ENCODE measurements at regions of chr4 and their contacts with region 1.

Region 1: GRCh38 chr4:80365928-80366327 is 30.4 kb downstream of the CFAP299 start:
- DNase-seq: peak; percentile 61
- H3K4me3 Mint-ChIP-seq: no peak overlapping the region
- H3K27ac Mint-ChIP-seq: no peak overlapping the region
- H3K4me1 Mint-ChIP-seq: peaks cover 4% of the 10 kb centered on the region
- H3K27me3 Mint-ChIP-seq: no peaks in the 10 kb centered on the region

Region 2: GRCh38 chr4:80321776-80322175 is 44.2 kb before region 1 on chr4:
- CTCF ChIA-PET with region 1: no interaction called
- POLR2A ChIA-PET with region 1: no interaction called
- intact Hi-C with region 1: no loop called
- DNase-seq: no peak
- H3K4me3 Mint-ChIP-seq: no peak overlapping the region
- H3K27ac Mint-ChIP-seq: no peak overlapping the region
- H3K4me1 Mint-ChIP-seq: no peaks in the 10 kb centered on the region
- H3K27me3 Mint-ChIP-seq: peaks cover 4% of the 10 kb centered on the region

Region 3: DNA sequence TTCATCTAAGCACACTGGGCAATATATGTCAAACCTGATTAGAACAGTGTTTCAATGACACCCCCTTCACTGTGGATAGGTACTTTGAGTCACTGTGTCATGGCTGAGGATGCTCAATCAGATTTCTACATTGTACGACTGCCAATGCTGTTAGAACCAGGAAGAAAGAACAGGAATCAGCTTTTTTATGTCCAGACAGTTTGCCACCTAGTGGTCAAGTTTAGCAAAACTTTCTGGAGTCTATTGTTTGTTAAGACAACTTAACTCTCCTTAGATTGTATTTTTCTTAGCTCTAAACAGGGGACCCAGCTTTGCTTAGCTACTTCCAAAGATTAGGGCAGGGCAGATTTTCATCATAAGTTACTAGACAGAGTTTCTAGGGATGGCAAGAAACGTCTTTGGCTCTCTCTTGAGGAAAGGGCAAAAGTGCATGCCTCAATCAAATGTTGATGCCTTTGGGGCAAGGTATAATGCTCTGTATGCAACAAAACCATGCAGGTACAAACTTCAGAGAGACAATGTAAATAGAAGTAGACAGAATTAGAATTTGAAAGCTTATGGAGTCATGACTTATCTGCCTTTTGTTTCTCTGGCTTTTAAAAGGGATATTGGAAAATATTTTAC is 624.1 kb after region 1 on chr4:
- CTCF ChIA-PET with region 1: interaction called, 64 read pairs
- POLR2A ChIA-PET with region 1: no interaction called
- intact Hi-C with region 1: loop called (anchors 1 kb)
- DNase-seq: no peak
- H3K4me3 Mint-ChIP-seq: no peak overlapping the region
- H3K27ac Mint-ChIP-seq: no peak overlapping the region
- H3K4me1 Mint-ChIP-seq: peaks cover 2% of the 10 kb centered on the region
- H3K27me3 Mint-ChIP-seq: peaks cover 3% of the 10 kb centered on the region

Region 4: GRCh38 chr4:81040012-81040659 is 674.2 kb after region 1 on chr4:
- CTCF ChIA-PET with region 1: interaction called, 17 read pairs
- POLR2A ChIA-PET with region 1: no interaction called
- intact Hi-C with region 1: loop called (anchors 2 kb)
- DNase-seq: no peak
- H3K4me3 Mint-ChIP-seq: no peak overlapping the region
- H3K27ac Mint-ChIP-seq: no peak overlapping the region
- H3K4me1 Mint-ChIP-seq: no peaks in the 10 kb centered on the region
- H3K27me3 Mint-ChIP-seq: peaks cover 8% of the 10 kb centered on the region

Region 5: GRCh38 chr4:81052119-81053068 is 686.5 kb after region 1 on chr4:
- CTCF ChIA-PET with region 1: interaction called, 7 read pairs
- POLR2A ChIA-PET with region 1: no interaction called
- intact Hi-C with region 1: loop called (anchors 1 kb)
- DNase-seq: peak; percentile 51
- H3K4me3 Mint-ChIP-seq: no peak overlapping the region
- H3K27ac Mint-ChIP-seq: no peak overlapping the region
- H3K4me1 Mint-ChIP-seq: no peaks in the 10 kb centered on the region
- H3K27me3 Mint-ChIP-seq: peaks cover 2% of the 10 kb centered on the region

Region 6: GRCh38 chr4:81351654-81352445 is 985.9 kb after region 1 on chr4:
- CTCF ChIA-PET with region 1: no interaction called
- POLR2A ChIA-PET with region 1: no interaction called
- intact Hi-C with region 1: loop called (anchors 10 kb)
- DNase-seq: peak; percentile 75
- H3K4me3 Mint-ChIP-seq: no peak overlapping the region
- H3K27ac Mint-ChIP-seq: no peak overlapping the region
- H3K4me1 Mint-ChIP-seq: no peaks in the 10 kb centered on the region
- H3K27me3 Mint-ChIP-seq: peaks cover 3% of the 10 kb centered on the region